ENCODE measurements at regions of chr7 and their contacts with region 1.

Region 1: GRCh38 chr7:76179686-76180085 is 22.0 kb upstream of the SRRM3 start:
- DNase-seq: no peak
- ATAC-seq: no peak
- H3K4me3 ChIP-seq: no peak overlapping the region
- H3K27ac ChIP-seq: no peak overlapping the region
- H3K4me1 ChIP-seq: peaks cover 12% of the 10 kb centered on the region
- H3K27me3 ChIP-seq: no peaks in the 10 kb centered on the region; a peak in 2 of 5 replicates
- CTCF ChIP-seq: no peak
- EP300 ChIP-seq: no peak
- POLR2A ChIP-seq: no peak
- RAD21 ChIP-seq: no peak

Region 2: GRCh38 chr7:76220185-76221057 is 40.7 kb after region 1 on chr7:
- CTCF ChIA-PET with region 1: no interaction called
- POLR2A ChIA-PET with region 1: no interaction called
- in situ Hi-C with region 1: no loop called
- intact Hi-C with region 1: loop called (anchors 1 kb)
- DNase-seq: peak; percentile 49
- ATAC-seq: peak; percentile 89
- H3K4me3 ChIP-seq: peak overlapping the region in 1 of 3 experiments; percentile 24; a peak in 1 of 6 replicates
- H3K27ac ChIP-seq: no peak overlapping the region
- H3K4me1 ChIP-seq: peaks cover 10% of the 10 kb centered on the region; the same call in 1 of the 2 replicates
- H3K27me3 ChIP-seq: peaks cover 0 to 17% of the 10 kb centered on the region in 2 experiments; a peak in 2 of 5 replicates
- CTCF ChIP-seq: peak; percentile 95
- EP300 ChIP-seq: no peak
- POLR2A ChIP-seq: no peak
- RAD21 ChIP-seq: peak; percentile 94

Region 3: GRCh38 chr7:76262683-76263402 is 83.2 kb after region 1 on chr7:
- CTCF ChIA-PET with region 1: interaction called, 63 read pairs
- POLR2A ChIA-PET with region 1: no interaction called
- in situ Hi-C with region 1: loop called (anchors 5 kb)
- intact Hi-C with region 1: loop called (anchors 1 kb)
- DNase-seq: peak; percentile 68
- ATAC-seq: peak; percentile 75
- H3K4me3 ChIP-seq: no peak overlapping the region
- H3K27ac ChIP-seq: no peak overlapping the region
- H3K4me1 ChIP-seq: peaks cover 43% of the 10 kb centered on the region
- H3K27me3 ChIP-seq: no peaks in the 10 kb centered on the region; a peak in 2 of 5 replicates
- CTCF ChIP-seq: peak; percentile 94
- EP300 ChIP-seq: no peak
- POLR2A ChIP-seq: no peak
- RAD21 ChIP-seq: peak; percentile 92

Region 4: GRCh38 chr7:76291343-76292212 is 111.9 kb after region 1 on chr7:
- CTCF ChIA-PET with region 1: interaction called, 11 read pairs
- POLR2A ChIA-PET with region 1: no interaction called
- in situ Hi-C with region 1: no loop called
- intact Hi-C with region 1: no loop called
- DNase-seq: peak; percentile 88
- ATAC-seq: peak; percentile 85
- H3K4me3 ChIP-seq: peak overlapping the region; percentile 65 to 75 (median 66)
- H3K27ac ChIP-seq: peak overlapping the region; percentile 89
- H3K4me1 ChIP-seq: peaks cover 66% of the 10 kb centered on the region
- H3K27me3 ChIP-seq: peaks cover 0 to 6% of the 10 kb centered on the region in 2 experiments; a peak in 3 of 5 replicates
- CTCF ChIP-seq: peak; percentile 97
- EP300 ChIP-seq: peak in 1 of 2 experiments; percentile 49; a peak in 2 of 4 replicates
- POLR2A ChIP-seq: peak; percentile 53 to 74
- RAD21 ChIP-seq: peak; percentile 97

Measured in HepG2 (cell line).